Activated CD4-positive, alpha-beta memory T cell treated with anti-CD3 and anti-CD28 coated beads for 36 hours (primary cell): ENCODE measurements at regions of chr13 and their contacts with region 1.

Region 1: GRCh38 chr13:50365408-50366391 is 350.5 kb downstream of the KCNRG start:
- DNase-seq: peak; percentile 76
- H3K4me3 Mint-ChIP-seq: peak overlapping the region; percentile 54
- H3K27ac Mint-ChIP-seq: peak overlapping the region; percentile 59
- H3K4me1 Mint-ChIP-seq: peaks cover 53% of the 10 kb centered on the region
- H3K27me3 Mint-ChIP-seq: peaks cover 15% of the 10 kb centered on the region

Region 2: DNA sequence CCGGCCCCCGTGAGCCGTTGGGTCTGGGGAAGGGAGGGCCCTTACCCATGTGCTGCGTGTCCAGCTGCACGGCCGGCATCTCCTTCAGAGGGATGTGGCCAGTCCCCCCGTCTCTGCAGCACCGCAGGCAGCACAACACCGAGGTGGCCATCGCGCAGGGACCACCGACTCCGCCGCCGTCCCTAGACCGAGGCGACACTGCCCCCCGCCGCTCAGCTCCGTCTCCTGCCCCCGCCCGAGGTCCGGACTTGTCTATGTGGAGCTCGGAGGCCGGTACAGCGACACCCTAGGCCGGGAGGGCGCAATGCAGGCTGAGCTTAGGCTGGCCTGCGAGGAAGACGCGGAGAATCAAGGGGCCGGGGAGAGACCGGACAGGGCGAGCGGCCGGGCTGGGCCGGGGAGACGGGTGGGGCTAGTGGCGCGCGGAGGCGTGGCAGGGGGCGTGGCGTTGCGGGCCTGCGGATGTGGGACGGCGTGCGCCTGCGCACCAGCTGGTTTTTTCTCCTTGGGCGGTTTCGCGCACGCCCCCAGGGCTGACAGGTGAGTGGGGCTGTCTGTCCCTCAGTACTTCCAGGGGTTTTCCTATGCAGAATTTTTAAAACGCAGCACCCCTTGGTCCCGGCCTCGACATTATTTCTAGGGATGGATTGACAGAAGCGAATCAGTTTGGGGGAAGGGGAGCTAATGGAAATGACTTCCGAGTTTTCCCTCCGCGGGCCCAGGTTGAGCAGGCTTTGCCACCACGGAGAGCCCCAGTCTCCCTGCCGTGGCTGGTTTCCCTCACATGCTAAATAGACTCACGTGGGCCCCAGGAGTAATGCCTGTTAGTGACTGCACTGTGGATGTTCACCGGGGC is 429.4 kb before region 1 on chr13 and contains the start of gene SPRYD7:
- CTCF ChIA-PET with region 1: no interaction called
- POLR2A ChIA-PET with region 1: no interaction called
- intact Hi-C with region 1: loop called (anchors 5 kb)
- DNase-seq: peak; percentile 97
- H3K4me3 Mint-ChIP-seq: peak within 1 kb of the TSS; percentile 92
- H3K27ac Mint-ChIP-seq: peak within 1 kb of the TSS; percentile 77
- H3K4me1 Mint-ChIP-seq: peaks cover 12% of the 10 kb centered on the region
- H3K27me3 Mint-ChIP-seq: no peaks in the 10 kb centered on the region
- total RNA-seq, gene SPRYD7: 4.9 to 5.4 TPM

Region 3: GRCh38 chr13:50123862-50124536 is 241.7 kb before region 1 on chr13:
- CTCF ChIA-PET with region 1: no interaction called
- POLR2A ChIA-PET with region 1: interaction called, 13 read pairs
- intact Hi-C with region 1: no loop called
- DNase-seq: peak; percentile 88
- H3K4me3 Mint-ChIP-seq: peak overlapping the region; percentile 81
- H3K27ac Mint-ChIP-seq: peak overlapping the region; percentile 90
- H3K4me1 Mint-ChIP-seq: peaks cover 58% of the 10 kb centered on the region
- H3K27me3 Mint-ChIP-seq: peaks cover 16% of the 10 kb centered on the region

Region 4: DNA sequence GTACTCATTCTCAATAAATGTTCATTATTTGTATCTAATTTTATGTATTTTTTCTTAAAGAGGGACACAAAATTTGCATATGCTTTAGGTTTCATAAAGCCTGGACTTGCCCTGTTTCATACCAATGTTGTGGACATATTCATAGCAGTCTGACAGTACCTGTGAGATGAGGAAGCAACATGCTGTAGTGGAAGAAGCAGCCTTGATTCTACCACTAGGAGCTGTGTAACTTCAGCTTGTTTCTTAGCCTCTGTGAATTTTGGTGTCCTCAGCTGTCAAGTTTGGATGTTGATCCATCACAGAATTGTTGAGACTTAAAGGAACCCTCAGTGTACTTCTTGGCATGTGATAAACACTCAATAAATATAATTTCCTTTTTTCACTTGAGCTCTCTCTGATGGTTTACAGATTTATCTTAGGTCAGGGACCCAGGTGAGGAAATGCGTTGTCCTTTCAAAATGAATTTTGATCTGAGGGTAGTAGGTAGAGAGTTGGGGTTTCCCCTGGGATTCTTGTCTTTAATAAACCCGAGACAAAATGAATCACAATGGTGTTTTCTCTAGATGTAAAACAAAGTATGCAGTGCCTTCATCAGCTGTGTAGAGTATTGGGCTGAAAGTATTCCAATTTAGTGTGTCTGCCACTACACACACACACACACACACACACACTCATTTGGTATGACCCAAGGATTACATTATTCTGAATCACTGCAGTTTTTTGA is 198.3 kb before region 1 on chr13:
- CTCF ChIA-PET with region 1: interaction called, 3 read pairs
- POLR2A ChIA-PET with region 1: interaction called, 3 read pairs
- intact Hi-C with region 1: loop called (anchors 1 kb)
- DNase-seq: no peak
- H3K4me3 Mint-ChIP-seq: no peak overlapping the region
- H3K27ac Mint-ChIP-seq: no peak overlapping the region
- H3K4me1 Mint-ChIP-seq: peaks cover 15% of the 10 kb centered on the region
- H3K27me3 Mint-ChIP-seq: peaks cover 13% of the 10 kb centered on the region

Region 5: GRCh38 chr13:50236898-50237318 is 128.8 kb before region 1 on chr13:
- CTCF ChIA-PET with region 1: no interaction called
- POLR2A ChIA-PET with region 1: interaction called, 13 read pairs
- intact Hi-C with region 1: loop called (anchors 1 kb)
- DNase-seq: peak; percentile 55
- H3K4me3 Mint-ChIP-seq: peak overlapping the region; percentile 65
- H3K27ac Mint-ChIP-seq: peak overlapping the region; percentile 81
- H3K4me1 Mint-ChIP-seq: peaks cover 49% of the 10 kb centered on the region
- H3K27me3 Mint-ChIP-seq: peaks cover 23% of the 10 kb centered on the region

Region 6: DNA sequence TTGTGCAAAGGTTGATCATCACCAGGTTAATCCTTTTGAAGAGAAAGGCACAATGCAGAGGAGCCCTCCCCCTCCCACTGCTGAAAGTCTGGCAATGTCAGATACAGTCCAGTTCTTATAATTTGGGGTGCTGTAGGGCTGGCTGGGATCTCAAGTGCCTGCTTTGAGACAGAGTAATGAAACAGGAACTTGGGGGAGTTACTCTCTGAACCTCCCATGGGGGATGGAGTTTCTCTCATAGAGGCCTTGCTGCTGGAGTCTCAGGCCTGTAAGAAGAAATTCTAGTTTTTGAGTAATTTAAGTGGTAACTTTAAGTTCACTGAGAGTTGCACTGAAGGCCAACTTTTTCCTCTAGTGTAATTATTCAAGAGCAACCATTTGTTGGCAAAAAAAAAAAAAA is 60.1 kb after region 1 on chr13:
- CTCF ChIA-PET with region 1: no interaction called
- POLR2A ChIA-PET with region 1: interaction called, 3 read pairs
- intact Hi-C with region 1: loop called (anchors 2 kb)
- DNase-seq: no peak
- H3K4me3 Mint-ChIP-seq: no peak overlapping the region
- H3K27ac Mint-ChIP-seq: no peak overlapping the region
- H3K4me1 Mint-ChIP-seq: peaks cover 35% of the 10 kb centered on the region
- H3K27me3 Mint-ChIP-seq: no peaks in the 10 kb centered on the region

Region 7: GRCh38 chr13:50650592-50651301 is 285.0 kb after region 1 on chr13:
- CTCF ChIA-PET with region 1: no interaction called
- POLR2A ChIA-PET with region 1: no interaction called
- intact Hi-C with region 1: no loop called
- DNase-seq: no peak
- H3K4me3 Mint-ChIP-seq: no peak overlapping the region
- H3K27ac Mint-ChIP-seq: no peak overlapping the region
- H3K4me1 Mint-ChIP-seq: no peaks in the 10 kb centered on the region
- H3K27me3 Mint-ChIP-seq: no peaks in the 10 kb centered on the region

Region 8: GRCh38 chr13:50685491-50685890 is 319.8 kb after region 1 on chr13:
- CTCF ChIA-PET with region 1: no interaction called
- POLR2A ChIA-PET with region 1: no interaction called
- intact Hi-C with region 1: no loop called
- DNase-seq: no peak
- H3K4me3 Mint-ChIP-seq: no peak overlapping the region
- H3K27ac Mint-ChIP-seq: no peak overlapping the region
- H3K4me1 Mint-ChIP-seq: peaks cover 5% of the 10 kb centered on the region
- H3K27me3 Mint-ChIP-seq: no peaks in the 10 kb centered on the region

Region 9: GRCh38 chr13:50893211-50893852 is 527.6 kb after region 1 on chr13:
- CTCF ChIA-PET with region 1: no interaction called
- POLR2A ChIA-PET with region 1: no interaction called
- intact Hi-C with region 1: loop called (anchors 5 kb)
- DNase-seq: peak; percentile 16
- H3K4me3 Mint-ChIP-seq: peak overlapping the region; percentile 53
- H3K27ac Mint-ChIP-seq: peak overlapping the region; percentile 84
- H3K4me1 Mint-ChIP-seq: peaks cover 39% of the 10 kb centered on the region
- H3K27me3 Mint-ChIP-seq: no peaks in the 10 kb centered on the region